Thyroid gland (tissue), 4 donors: ENCODE measurements at regions of chr16 and their contacts with region 1.

Region 1: DNA sequence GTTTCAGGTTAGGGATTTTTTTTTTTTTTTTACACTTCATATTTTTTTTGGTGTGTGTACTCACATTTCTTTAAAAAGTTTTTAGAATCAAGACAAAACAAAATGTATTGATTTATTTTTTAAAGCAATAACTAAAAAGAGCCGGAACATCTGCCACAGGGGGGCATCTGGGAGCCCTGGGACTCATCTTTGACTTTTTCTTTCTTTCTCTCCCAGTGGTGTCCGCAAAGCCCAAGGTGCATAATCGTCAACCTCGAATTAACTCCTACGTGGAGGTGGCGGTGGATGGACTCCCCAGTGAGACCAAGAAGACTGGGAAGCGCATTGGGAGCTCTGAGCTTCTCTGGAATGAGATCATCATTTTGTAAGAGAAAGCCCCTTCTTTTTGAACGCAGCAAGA is 36.3 kb downstream of the WWP2 start:
- DNase-seq: no peak
- H3K4me3 ChIP-seq: no peak overlapping the region
- H3K27ac ChIP-seq: no peak overlapping the region
- H3K4me1 ChIP-seq: peaks cover 0 to 4% of the 10 kb centered on the region in 2 donors
- H3K27me3 ChIP-seq: no peaks in the 10 kb centered on the region
- CTCF ChIP-seq: no peak
- POLR2A ChIP-seq: no peak

Region 2: GRCh38 chr16:69632836-69633235 is 165.6 kb before region 1 on chr16:
- intact Hi-C with region 1: no loop called
- DNase-seq: no peak
- H3K4me3 ChIP-seq: no peak overlapping the region
- H3K27ac ChIP-seq: no peak overlapping the region
- H3K4me1 ChIP-seq: no peaks in the 10 kb centered on the region
- H3K27me3 ChIP-seq: no peaks in the 10 kb centered on the region
- CTCF ChIP-seq: no peak
- POLR2A ChIP-seq: no peak

Region 3: DNA sequence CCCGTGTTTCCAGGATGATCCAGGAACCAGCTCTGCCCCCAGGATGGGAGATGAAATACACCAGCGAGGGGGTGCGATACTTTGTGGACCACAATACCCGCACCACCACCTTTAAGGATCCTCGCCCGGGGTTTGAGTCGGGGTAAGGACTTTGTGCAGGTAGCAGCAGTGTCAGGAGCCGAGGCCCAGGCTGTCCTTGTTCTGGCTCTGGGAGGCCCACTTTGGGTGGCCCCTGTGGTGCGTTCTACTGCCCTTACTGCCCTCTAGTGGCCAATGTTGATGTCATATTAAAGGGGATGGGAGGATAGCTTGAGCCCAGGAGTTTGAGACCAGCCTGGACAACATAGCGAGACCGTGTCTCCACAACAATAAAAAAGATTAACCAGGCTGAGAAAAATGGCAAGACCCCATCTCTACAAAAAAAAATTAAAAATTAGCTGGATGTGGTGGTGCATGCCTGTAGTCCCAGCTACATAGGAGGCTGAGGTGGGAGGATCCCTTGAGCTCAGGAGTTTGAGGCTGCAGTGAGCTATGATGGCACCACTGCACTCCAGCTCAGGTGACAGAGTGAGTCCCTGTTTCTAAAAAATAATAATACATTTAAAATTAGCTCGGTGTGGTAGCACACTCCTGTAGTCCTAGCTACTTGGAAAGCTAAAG is 131.8 kb after region 1 on chr16:
- intact Hi-C with region 1: loop called (anchors 2 kb)
- DNase-seq: peak; percentile 56 to 62
- H3K4me3 ChIP-seq: no peak overlapping the region
- H3K27ac ChIP-seq: no peak overlapping the region
- H3K4me1 ChIP-seq: peaks cover 0 to 9% of the 10 kb centered on the region in 2 donors
- H3K27me3 ChIP-seq: no peaks in the 10 kb centered on the region
- CTCF ChIP-seq: peak; percentile 60 to 79 (median 76)
- POLR2A ChIP-seq: no peak